ENCODE measurements at regions of chr2 and their contacts with region 1.

Region 1: GRCh38 chr2:70009762-70010575 is 48.5 kb upstream of the ASPRV1 start:
- DNase-seq: no peak
- ATAC-seq: no peak; a peak in 1 of 6 replicates
- H3K4me3 ChIP-seq: no peak overlapping the region
- H3K27ac ChIP-seq: no peak overlapping the region
- H3K4me1 ChIP-seq: no peaks in the 10 kb centered on the region
- CTCF ChIP-seq: no peak
- EP300 ChIP-seq: no peak
- POLR2A ChIP-seq: no peak; the same call in 1 of the 2 replicates
- RAD21 ChIP-seq: no peak

Region 2: DNA sequence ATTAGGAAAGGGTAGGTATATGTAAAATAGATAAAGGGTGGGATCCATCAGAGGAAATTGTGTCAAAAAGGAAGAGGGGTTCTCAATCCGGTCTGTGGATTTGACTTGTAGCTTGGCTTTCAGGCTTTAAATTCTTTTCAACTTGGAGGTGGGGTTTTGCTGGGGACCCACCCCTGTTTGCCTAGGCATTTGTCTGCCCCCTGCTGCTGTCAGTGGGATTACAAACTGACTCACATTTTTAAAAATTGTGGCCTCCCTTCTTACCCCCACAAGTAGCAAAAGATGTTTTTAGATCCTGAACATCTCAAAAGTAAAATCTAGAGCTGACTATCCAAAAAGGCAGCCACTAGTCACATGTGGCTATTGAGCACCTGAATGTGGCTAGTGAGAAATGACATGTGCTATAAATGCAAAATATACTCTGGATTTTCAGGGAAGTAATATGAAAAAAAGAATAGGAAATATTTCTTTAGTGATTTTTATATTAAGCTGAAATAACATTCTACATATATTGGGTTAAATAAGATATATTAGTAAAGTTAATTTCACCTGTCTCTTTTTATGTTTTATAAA is 801.9 kb before region 1 on chr2:
- CTCF ChIA-PET with region 1: no interaction called
- POLR2A ChIA-PET with region 1: no interaction called
- DNase-seq: peak in 1 of 2 experiments; percentile 20
- ATAC-seq: peak in 1 of 2 experiments; percentile 35; a peak in 1 of 6 replicates
- H3K4me3 ChIP-seq: no peak overlapping the region
- H3K27ac ChIP-seq: no peak overlapping the region
- H3K4me1 ChIP-seq: no peaks in the 10 kb centered on the region
- CTCF ChIP-seq: 0 out of 3 replicates have a peak, but pooled peaks have one; percentile 16
- EP300 ChIP-seq: no peak
- POLR2A ChIP-seq: no peak
- RAD21 ChIP-seq: peak in 1 of 2 experiments; percentile 28; a peak in 2 of 5 replicates

Region 3: GRCh38 chr2:69997015-69997830 is 12.7 kb before region 1 on chr2:
- CTCF ChIA-PET with region 1: interaction called, 11 read pairs
- POLR2A ChIA-PET with region 1: no interaction called
- DNase-seq: peak; percentile 68 to 70
- ATAC-seq: peak; percentile 81 to 86
- H3K4me3 ChIP-seq: no peak overlapping the region
- H3K27ac ChIP-seq: peak overlapping the region; percentile 54 to 67; a peak in 5 of 6 replicates
- H3K4me1 ChIP-seq: peaks cover 23% of the 10 kb centered on the region
- CTCF ChIP-seq: no peak
- EP300 ChIP-seq: no peak
- POLR2A ChIP-seq: no peak
- RAD21 ChIP-seq: no peak

Measured in A549 (cell line).